ENCODE measurements at regions of chr16 and their contacts with region 1.

Region 1: GRCh38 chr16:71961066-71962039 is 38.8 kb downstream of the PKD1L3 start:
- DNase-seq: peak; percentile 94
- H3K4me3 Mint-ChIP-seq: no peak overlapping the region
- H3K27ac Mint-ChIP-seq: no peak overlapping the region
- H3K4me1 Mint-ChIP-seq: peaks cover 2% of the 10 kb centered on the region
- H3K27me3 Mint-ChIP-seq: no peaks in the 10 kb centered on the region

Region 2: GRCh38 chr16:71746442-71747046 is 214.8 kb before region 1 on chr16:
- CTCF ChIA-PET with region 1: interaction called, 6 read pairs
- intact Hi-C with region 1: loop called (anchors 1 kb)
- DNase-seq: peak; percentile 49
- H3K4me3 Mint-ChIP-seq: no peak overlapping the region
- H3K27ac Mint-ChIP-seq: no peak overlapping the region
- H3K4me1 Mint-ChIP-seq: peaks cover 5% of the 10 kb centered on the region
- H3K27me3 Mint-ChIP-seq: no peaks in the 10 kb centered on the region

Region 3: GRCh38 chr16:71894921-71895678 is 66.3 kb before region 1 on chr16 and contains the start of gene IST1:
- CTCF ChIA-PET with region 1: interaction called, 7 read pairs
- intact Hi-C with region 1: loop called (anchors 1 kb)
- DNase-seq: peak; percentile 99
- H3K4me3 Mint-ChIP-seq: peak within 1 kb of the TSS; percentile 97
- H3K27ac Mint-ChIP-seq: peak within 1 kb of the TSS; percentile 96
- H3K4me1 Mint-ChIP-seq: peaks cover 33% of the 10 kb centered on the region
- H3K27me3 Mint-ChIP-seq: no peaks in the 10 kb centered on the region
- total RNA-seq, gene IST1: 196 to 203 TPM

Region 4: GRCh38 chr16:71919035-71919434 is 42.3 kb before region 1 on chr16:
- CTCF ChIA-PET with region 1: interaction called, 4 read pairs
- intact Hi-C with region 1: loop called (anchors 5 kb)
- DNase-seq: no peak
- H3K4me3 Mint-ChIP-seq: no peak overlapping the region
- H3K27ac Mint-ChIP-seq: no peak overlapping the region
- H3K4me1 Mint-ChIP-seq: peaks cover 28% of the 10 kb centered on the region
- H3K27me3 Mint-ChIP-seq: no peaks in the 10 kb centered on the region

Measured in activated naive CD4-positive, alpha-beta T cell treated with anti-CD3 and anti-CD28 coated beads for 36 hours (primary cell).